ENCODE measurements at regions of chr6 and their contacts with region 1.

Region 1: DNA sequence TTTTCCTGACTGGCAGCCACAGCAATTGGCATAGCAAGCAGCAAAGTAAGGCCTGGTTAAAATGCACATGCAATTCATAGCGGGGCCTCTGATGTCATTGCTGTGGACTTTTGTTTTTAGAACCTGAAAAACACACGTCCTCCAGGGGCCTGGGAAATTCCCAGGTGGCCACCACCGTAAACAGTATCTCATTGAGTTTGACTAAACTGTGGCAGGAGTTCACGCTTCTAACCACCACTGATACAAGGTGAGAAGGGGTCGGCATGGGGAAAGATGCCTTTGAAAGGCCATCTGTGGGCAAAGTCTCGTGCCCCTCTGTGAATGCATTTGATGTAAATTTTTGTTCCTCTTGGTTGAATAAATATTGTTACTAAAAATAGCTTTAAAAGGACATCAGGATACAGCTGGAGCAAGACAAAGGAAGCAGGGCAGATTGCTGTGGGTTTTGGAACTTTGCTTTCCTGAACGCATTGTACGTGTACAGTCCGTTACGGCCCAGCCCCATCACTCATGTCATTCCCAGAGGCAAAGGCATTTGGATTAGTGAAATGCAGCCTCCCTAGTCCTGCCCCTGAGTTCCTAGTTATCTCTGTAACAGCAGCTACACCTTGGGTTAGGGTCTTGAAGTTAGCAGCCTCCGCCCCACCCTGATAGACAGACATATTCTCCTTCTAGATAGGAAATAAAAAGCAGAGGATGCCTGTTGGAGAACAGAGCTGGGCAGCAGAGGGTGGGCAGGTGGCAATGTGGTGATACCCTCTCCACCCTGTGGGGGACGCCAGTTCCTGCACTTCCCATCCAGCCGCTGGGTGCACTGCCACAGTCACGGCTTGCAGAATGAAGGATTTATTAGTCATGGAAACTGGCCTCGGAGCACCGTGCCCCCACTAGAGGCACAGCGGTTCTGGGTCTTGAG is 80.3 kb downstream of the ZDHHC14 start:
- DNase-seq: no peak
- ATAC-seq: peak; percentile 36 to 74 (median 40)
- H3K4me3 ChIP-seq: no peak overlapping the region
- H3K27ac ChIP-seq: peak overlapping the region in 9 of 12 donors; percentile 17 to 54 (median 40)
- H3K4me1 ChIP-seq: peaks cover 0 to 36% (median 20%) of the 10 kb centered on the region in 12 donors
- H3K27me3 ChIP-seq: no peaks in the 10 kb centered on the region
- CTCF ChIP-seq: peak in 1 of 12 donors; percentile 19
- POLR2A ChIP-seq: no peak

Region 2: GRCh38 chr6:157514659-157515496 is 53.6 kb after region 1 on chr6:
- intact Hi-C with region 1: loop called in 1 of 10 experiments (anchors 5 kb)
- DNase-seq: no peak
- ATAC-seq: peak; percentile 45 to 81 (median 72)
- H3K4me3 ChIP-seq: no peak overlapping the region
- H3K27ac ChIP-seq: no peak overlapping the region
- H3K4me1 ChIP-seq: peaks cover 0 to 16% (median 0%) of the 10 kb centered on the region in 12 donors
- H3K27me3 ChIP-seq: no peaks in the 10 kb centered on the region
- CTCF ChIP-seq: no peak
- POLR2A ChIP-seq: no peak

Measured in heart left ventricle (tissue), 16 donors.